ENCODE measurements at regions of chr11 and their contacts with region 1.

Region 1: GRCh38 chr11:65329944-65330403 is 3.7 kb upstream of the DPF2 start:
- DNase-seq: peak; percentile 92
- ATAC-seq: peak; percentile 35
- H3K4me3 Mint-ChIP-seq: no peak overlapping the region
- H3K27ac Mint-ChIP-seq: no peak overlapping the region
- H3K4me1 Mint-ChIP-seq: peaks cover 12% of the 10 kb centered on the region
- H3K27me3 Mint-ChIP-seq: no peaks in the 10 kb centered on the region

Region 2: GRCh38 chr11:65204646-65205601 is 125.0 kb before region 1 on chr11:
- CTCF ChIA-PET with region 1: interaction called, 31 read pairs
- POLR2A ChIA-PET with region 1: no interaction called
- intact Hi-C with region 1: loop called in 1 of 2 experiments (anchors 1 kb)
- DNase-seq: peak; percentile 73
- ATAC-seq: peak; percentile 78
- H3K4me3 Mint-ChIP-seq: no peak overlapping the region
- H3K27ac Mint-ChIP-seq: no peak overlapping the region
- H3K4me1 Mint-ChIP-seq: no peaks in the 10 kb centered on the region
- H3K27me3 Mint-ChIP-seq: no peaks in the 10 kb centered on the region

Region 3: DNA sequence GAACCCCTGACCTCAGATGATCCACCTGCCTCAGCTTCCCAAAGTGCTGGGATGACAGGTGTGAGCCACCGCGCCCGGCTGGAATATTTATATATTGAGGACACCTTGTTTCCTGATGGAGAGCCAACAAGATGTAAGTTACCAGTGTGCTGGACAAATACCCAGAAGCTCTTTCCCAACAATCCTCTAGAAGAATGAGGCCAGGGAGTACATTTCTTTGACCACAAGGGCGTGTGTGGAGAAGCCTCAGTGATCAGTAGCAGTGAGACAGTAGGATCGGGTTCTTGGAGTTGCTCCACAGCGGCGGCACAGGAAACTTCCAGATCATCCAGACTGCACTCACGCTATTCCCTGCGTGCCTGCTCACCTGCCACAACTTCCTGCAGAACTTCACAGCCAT is 78.5 kb before region 1 on chr11:
- CTCF ChIA-PET with region 1: interaction called, 11 read pairs
- POLR2A ChIA-PET with region 1: interaction called, 3 read pairs
- intact Hi-C with region 1: no loop called
- DNase-seq: no peak
- ATAC-seq: no peak
- H3K4me3 Mint-ChIP-seq: no peak overlapping the region
- H3K27ac Mint-ChIP-seq: no peak overlapping the region
- H3K4me1 Mint-ChIP-seq: no peaks in the 10 kb centered on the region
- H3K27me3 Mint-ChIP-seq: no peaks in the 10 kb centered on the region

Region 4: GRCh38 chr11:65314501-65315203 is 15.3 kb before region 1 on chr11 and contains the start of gene CDC42EP2:
- CTCF ChIA-PET with region 1: interaction called, 86 read pairs
- POLR2A ChIA-PET with region 1: interaction called, 5 read pairs
- intact Hi-C with region 1: loop called in 1 of 2 experiments (anchors 1 kb)
- DNase-seq: peak; percentile 87
- ATAC-seq: peak; percentile 90
- H3K4me3 Mint-ChIP-seq: peak within 1 kb of the TSS; percentile 73
- H3K27ac Mint-ChIP-seq: no peak within 1 kb of the TSS
- H3K4me1 Mint-ChIP-seq: peaks cover 11% of the 10 kb centered on the region
- H3K27me3 Mint-ChIP-seq: peaks cover 5% of the 10 kb centered on the region
- total RNA-seq, gene CDC42EP2: 0.91 to 0.93 TPM

Region 5: GRCh38 chr11:65354265-65355012 is 24.5 kb after region 1 on chr11 and contains the start of gene TIGD3:
- CTCF ChIA-PET with region 1: interaction called, 48 read pairs
- POLR2A ChIA-PET with region 1: interaction called, 9 read pairs
- intact Hi-C with region 1: loop called (anchors 1 to 2 kb)
- DNase-seq: peak; percentile 98
- ATAC-seq: peak; percentile 99
- H3K4me3 Mint-ChIP-seq: peak within 1 kb of the TSS; percentile 73
- H3K27ac Mint-ChIP-seq: peak within 1 kb of the TSS; percentile 42
- H3K4me1 Mint-ChIP-seq: peaks cover 13% of the 10 kb centered on the region
- H3K27me3 Mint-ChIP-seq: no peaks in the 10 kb centered on the region
- total RNA-seq, gene TIGD3: 0.58 to 1.1 TPM